ENCODE measurements at regions of chr1 and their contacts with region 1.

Region 1: DNA sequence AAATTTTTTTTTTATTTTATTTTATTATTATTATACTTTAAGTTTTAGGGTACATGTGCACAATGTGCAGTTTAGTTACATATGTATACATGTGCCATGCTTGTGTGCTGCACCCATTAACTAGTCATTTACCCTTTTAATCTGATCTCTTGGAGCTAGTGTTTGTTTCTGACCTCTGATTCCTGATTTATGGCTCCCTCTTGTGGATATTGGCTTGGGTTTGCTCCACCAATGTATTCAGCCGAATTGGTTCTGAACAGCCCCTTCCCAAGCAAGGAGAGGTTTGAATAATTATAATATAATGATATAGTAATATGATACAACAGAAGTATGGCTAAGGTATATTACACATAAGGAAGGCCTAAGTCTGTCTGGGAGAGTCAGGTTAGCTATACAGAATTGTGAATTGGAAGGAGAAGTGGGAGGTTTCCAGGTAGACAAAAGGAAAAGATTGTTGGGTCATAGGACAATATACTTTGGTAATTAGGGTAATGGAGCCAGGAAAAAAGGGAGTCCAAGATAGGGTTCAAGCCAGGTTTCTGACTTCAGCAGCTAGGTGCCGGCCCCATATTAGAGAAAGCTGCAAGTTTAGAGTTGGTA is 53.1 kb upstream of the HMCN1 start:
- DNase-seq: peak in 5 of 14 experiments; percentile 6 to 74 (median 58)
- ATAC-seq: peak; percentile 62
- H3K4me3 ChIP-seq: no peak overlapping the region
- H3K4me3 Mint-ChIP-seq: no peak overlapping the region
- H3K27ac ChIP-seq: no peak overlapping the region
- H3K27ac Mint-ChIP-seq: no peak overlapping the region
- H3K4me1 ChIP-seq: peaks cover 9% of the 10 kb centered on the region
- H3K4me1 Mint-ChIP-seq: peaks cover 33% of the 10 kb centered on the region
- H3K27me3 ChIP-seq: no peaks in the 10 kb centered on the region
- H3K27me3 Mint-ChIP-seq: no peaks in the 10 kb centered on the region
- CTCF ChIP-seq: peak; percentile 73

Region 2: GRCh38 chr1:185038813-185039376 is 642.2 kb before region 1 on chr1:
- CTCF ChIA-PET with region 1: no interaction called
- POLR2A ChIA-PET with region 1: no interaction called
- intact Hi-C with region 1: loop called in 1 of 2 experiments (anchors 5 kb)
- DNase-seq: no peak
- ATAC-seq: no peak
- H3K4me3 ChIP-seq: no peak overlapping the region
- H3K4me3 Mint-ChIP-seq: no peak overlapping the region
- H3K27ac ChIP-seq: no peak overlapping the region
- H3K27ac Mint-ChIP-seq: no peak overlapping the region
- H3K4me1 ChIP-seq: no peaks in the 10 kb centered on the region
- H3K4me1 Mint-ChIP-seq: peaks cover 9% of the 10 kb centered on the region
- H3K27me3 ChIP-seq: no peaks in the 10 kb centered on the region
- H3K27me3 Mint-ChIP-seq: no peaks in the 10 kb centered on the region
- CTCF ChIP-seq: no peak

Measured in CD4-positive, alpha-beta T cell (primary cell).